ENCODE measurements at regions of chr5 and their contacts with region 1.

Region 1: GRCh38 chr5:38316544-38317224 is 58.3 kb downstream of the EGFLAM start:
- DNase-seq: no peak
- H3K4me3 Mint-ChIP-seq: no peak overlapping the region
- H3K27ac Mint-ChIP-seq: no peak overlapping the region
- H3K4me1 Mint-ChIP-seq: no peaks in the 10 kb centered on the region
- H3K27me3 Mint-ChIP-seq: peaks cover 65% of the 10 kb centered on the region
- CTCF ChIP-seq: no peak

Region 2: DNA sequence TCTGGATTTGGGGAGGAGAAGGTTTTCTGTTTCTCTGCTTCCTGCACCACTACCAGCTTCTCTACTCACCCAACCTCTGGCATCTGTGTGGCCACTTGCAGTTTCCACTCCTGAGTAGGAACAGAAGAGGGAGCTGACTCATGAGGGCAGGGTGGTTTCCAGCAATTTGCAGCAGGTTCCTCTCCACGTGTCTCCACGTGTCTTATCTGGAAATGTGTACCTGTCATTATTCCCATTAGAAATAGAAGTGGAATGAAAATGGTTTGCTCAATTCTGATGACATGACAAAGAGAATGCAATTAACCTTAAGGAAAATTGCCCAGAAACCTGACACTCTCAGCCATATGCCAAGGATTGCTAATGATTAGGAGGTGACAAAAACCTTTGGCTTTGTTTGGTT is 25.3 kb before region 1 on chr5:
- CTCF ChIA-PET with region 1: no interaction called
- intact Hi-C with region 1: loop called (anchors 1 kb)
- DNase-seq: no peak
- H3K4me3 Mint-ChIP-seq: no peak overlapping the region
- H3K27ac Mint-ChIP-seq: no peak overlapping the region
- H3K4me1 Mint-ChIP-seq: no peaks in the 10 kb centered on the region
- H3K27me3 Mint-ChIP-seq: peaks cover 40% of the 10 kb centered on the region
- CTCF ChIP-seq: no peak

Measured in Calu3 (cell line).